Caco-2 (cell line): ENCODE measurements at regions of chr3 and their contacts with region 1.

Region 1: DNA sequence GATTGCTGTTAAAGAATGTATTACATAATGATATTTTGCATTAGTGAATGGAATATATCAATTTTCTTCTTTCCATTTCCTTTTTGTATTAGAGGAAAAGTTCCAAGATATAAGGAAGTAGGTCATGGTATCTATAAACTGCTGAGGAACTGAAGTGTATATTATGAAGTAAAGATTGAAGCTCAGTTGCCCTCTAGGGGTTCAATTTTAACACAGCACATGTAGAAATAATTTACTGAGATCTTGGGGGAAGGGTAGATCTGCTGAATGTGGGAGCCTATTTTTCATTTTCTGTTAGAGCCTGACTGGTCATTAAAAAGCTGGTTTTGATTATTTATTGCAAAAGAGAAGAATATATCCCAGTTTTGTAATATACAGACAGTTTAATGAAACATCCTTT is 45.2 kb downstream of the CMC1 start:
- DNase-seq: peak in 1 of 2 experiments; percentile 8
- H3K4me3 ChIP-seq: no peak overlapping the region
- H3K4me3 Mint-ChIP-seq: no peak overlapping the region
- H3K27ac Mint-ChIP-seq: no peak overlapping the region
- H3K4me1 ChIP-seq: no peaks in the 10 kb centered on the region
- H3K4me1 Mint-ChIP-seq: no peaks in the 10 kb centered on the region
- H3K27me3 ChIP-seq: no peaks in the 10 kb centered on the region
- H3K27me3 Mint-ChIP-seq: no peaks in the 10 kb centered on the region
- CTCF ChIP-seq: peak; percentile 32 to 53

Region 2: GRCh38 chr3:27943106-27943505 is 343.5 kb before region 1 on chr3:
- CTCF ChIA-PET with region 1: no interaction called
- POLR2A ChIA-PET with region 1: no interaction called
- intact Hi-C with region 1: loop called (anchors 1 kb)
- DNase-seq: peak in 1 of 2 experiments; percentile 20
- H3K4me3 ChIP-seq: no peak overlapping the region
- H3K4me3 Mint-ChIP-seq: no peak overlapping the region
- H3K27ac Mint-ChIP-seq: no peak overlapping the region
- H3K4me1 ChIP-seq: no peaks in the 10 kb centered on the region
- H3K4me1 Mint-ChIP-seq: no peaks in the 10 kb centered on the region
- H3K27me3 ChIP-seq: no peaks in the 10 kb centered on the region
- H3K27me3 Mint-ChIP-seq: peaks cover 2% of the 10 kb centered on the region
- CTCF ChIP-seq: peak; percentile 19 to 44

Region 3: GRCh38 chr3:28077572-28077971 is 209.0 kb before region 1 on chr3:
- CTCF ChIA-PET with region 1: no interaction called
- POLR2A ChIA-PET with region 1: no interaction called
- intact Hi-C with region 1: loop called (anchors 2 kb)
- DNase-seq: no peak
- H3K4me3 ChIP-seq: no peak overlapping the region
- H3K4me3 Mint-ChIP-seq: no peak overlapping the region
- H3K27ac Mint-ChIP-seq: no peak overlapping the region
- H3K4me1 ChIP-seq: peaks cover 14% of the 10 kb centered on the region
- H3K4me1 Mint-ChIP-seq: peaks cover 10% of the 10 kb centered on the region
- H3K27me3 ChIP-seq: no peaks in the 10 kb centered on the region
- H3K27me3 Mint-ChIP-seq: peaks cover 5% of the 10 kb centered on the region
- CTCF ChIP-seq: no peak

Region 4: DNA sequence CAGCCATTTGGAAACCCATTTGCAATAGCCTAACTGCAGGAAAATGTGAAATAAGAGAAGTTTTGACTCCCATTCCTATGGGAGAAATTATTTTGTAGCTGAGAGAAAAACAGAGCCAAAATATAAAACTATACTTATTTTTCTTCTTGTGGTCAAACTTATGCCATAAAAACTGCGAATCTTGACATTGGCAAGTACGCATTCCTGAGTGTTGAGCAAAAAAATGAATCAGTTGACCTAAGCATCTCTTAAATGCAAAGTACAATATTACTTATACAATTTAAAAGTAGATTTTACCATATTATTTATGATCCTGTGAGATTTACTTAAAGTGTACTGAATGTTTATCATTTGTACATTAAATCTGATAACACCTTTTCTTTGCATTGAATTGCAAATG is 95.2 kb before region 1 on chr3:
- CTCF ChIA-PET with region 1: no interaction called
- POLR2A ChIA-PET with region 1: no interaction called
- intact Hi-C with region 1: no loop called
- DNase-seq: no peak
- H3K4me3 ChIP-seq: no peak overlapping the region
- H3K4me3 Mint-ChIP-seq: no peak overlapping the region
- H3K27ac Mint-ChIP-seq: no peak overlapping the region
- H3K4me1 ChIP-seq: no peaks in the 10 kb centered on the region
- H3K4me1 Mint-ChIP-seq: no peaks in the 10 kb centered on the region
- H3K27me3 ChIP-seq: no peaks in the 10 kb centered on the region
- H3K27me3 Mint-ChIP-seq: no peaks in the 10 kb centered on the region
- CTCF ChIP-seq: no peak

Region 5: GRCh38 chr3:28210968-28211713 is 75.5 kb before region 1 on chr3:
- CTCF ChIA-PET with region 1: no interaction called
- POLR2A ChIA-PET with region 1: no interaction called
- intact Hi-C with region 1: no loop called
- DNase-seq: no peak
- H3K4me3 ChIP-seq: no peak overlapping the region
- H3K4me3 Mint-ChIP-seq: no peak overlapping the region
- H3K27ac Mint-ChIP-seq: no peak overlapping the region
- H3K4me1 ChIP-seq: peaks cover 6% of the 10 kb centered on the region; the same call in 1 of the 2 replicates
- H3K4me1 Mint-ChIP-seq: no peaks in the 10 kb centered on the region
- H3K27me3 ChIP-seq: no peaks in the 10 kb centered on the region
- H3K27me3 Mint-ChIP-seq: no peaks in the 10 kb centered on the region
- CTCF ChIP-seq: no peak